ENCODE measurements at regions of chr2 and their contacts with region 1.

Region 1: DNA sequence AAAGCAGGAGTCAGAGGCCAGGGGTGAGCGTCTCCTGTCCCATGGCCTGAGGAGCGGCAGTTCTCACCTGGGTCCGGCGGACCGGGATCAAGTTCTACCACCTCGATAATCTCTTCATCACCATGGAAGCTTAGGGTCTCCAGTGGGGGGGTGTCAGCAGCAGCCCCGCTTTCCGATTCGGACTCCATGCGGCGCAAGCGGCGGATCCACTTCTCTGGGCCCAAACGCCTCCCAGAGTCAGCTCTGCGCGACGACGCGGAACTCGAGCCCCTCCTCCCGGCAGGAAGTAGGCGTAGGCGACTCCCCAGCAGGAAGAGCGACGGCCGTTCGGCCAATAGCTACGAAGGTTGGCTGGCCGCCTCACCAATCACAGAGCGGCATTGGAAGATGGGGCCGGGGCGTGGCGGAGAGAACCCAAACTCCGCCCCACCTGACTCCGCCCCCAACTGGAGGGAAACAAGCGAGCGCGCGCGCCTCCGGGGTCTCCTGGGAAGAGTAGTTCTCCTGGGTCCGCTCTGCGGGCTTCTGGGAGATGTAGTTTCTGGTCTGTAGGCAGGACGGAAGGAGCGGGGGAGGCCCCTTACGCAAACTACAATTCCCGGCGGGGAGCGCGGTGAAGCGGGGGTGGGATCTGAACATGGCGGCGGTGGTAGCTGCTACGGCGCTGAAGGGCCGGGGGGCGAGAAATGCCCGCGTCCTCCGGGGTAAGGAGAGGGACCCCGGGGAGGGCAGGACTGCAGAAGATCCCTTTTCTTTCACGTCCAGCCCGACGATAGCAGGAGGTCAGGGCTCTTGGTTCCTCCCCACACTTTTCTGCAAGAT is at the starts of genes AAMP and PNKD:
- DNase-seq: peak; percentile 100
- H3K4me3 ChIP-seq: peak within 1 kb of the TSS; percentile 76 to 94 (median 88)
- H3K27ac ChIP-seq: peak within 1 kb of the TSS; percentile 79 to 87 (median 84)
- H3K4me1 ChIP-seq: peaks cover 0 to 51% (median 38%) of the 10 kb centered on the region in 4 donors
- H3K27me3 ChIP-seq: no peaks in the 10 kb centered on the region
- CTCF ChIP-seq: no peak
- EP300 ChIP-seq: peak in 1 of 4 donors; percentile 10
- POLR2A ChIP-seq: peak; percentile 73 to 76
- total RNA-seq, gene AAMP: 85.7 to 103 (median 90.0) TPM
- total RNA-seq, gene PNKD: 46.8 to 95.1 (median 69.1) TPM

Region 2: GRCh38 chr2:218137514-218137913 is 132.6 kb before region 1 on chr2:
- intact Hi-C with region 1: no loop called
- DNase-seq: no peak
- H3K4me3 ChIP-seq: no peak overlapping the region
- H3K27ac ChIP-seq: no peak overlapping the region
- H3K4me1 ChIP-seq: peaks cover 0 to 8% (median 2%) of the 10 kb centered on the region in 4 donors
- H3K27me3 ChIP-seq: peaks cover 0 to 11% (median 0%) of the 10 kb centered on the region in 3 donors
- CTCF ChIP-seq: no peak
- EP300 ChIP-seq: no peak
- POLR2A ChIP-seq: no peak

Region 3: DNA sequence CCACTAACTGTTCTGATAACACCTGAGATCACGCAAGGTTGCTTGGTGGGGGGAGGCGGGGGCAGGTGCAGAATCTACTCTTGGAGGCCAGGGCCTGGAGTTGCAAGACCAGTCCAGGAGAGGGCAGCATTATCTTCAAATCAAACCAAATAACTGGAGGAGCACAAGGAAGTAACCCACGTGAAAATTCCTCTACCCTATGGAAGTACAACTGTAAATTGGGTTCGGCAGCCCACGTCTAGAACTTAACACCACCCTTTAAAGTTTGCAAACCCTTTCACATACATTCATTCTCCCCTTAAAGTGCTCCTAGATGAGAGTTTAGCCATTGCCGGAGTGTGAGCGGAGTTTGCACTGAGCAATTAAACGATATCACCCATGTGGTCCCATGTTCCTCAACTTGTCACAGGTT is 83.7 kb before region 1 on chr2:
- intact Hi-C with region 1: loop called (anchors 5 kb)
- DNase-seq: peak; percentile 76
- H3K4me3 ChIP-seq: no peak overlapping the region
- H3K27ac ChIP-seq: peak overlapping the region in 3 of 4 donors; percentile 66 to 81 (median 79)
- H3K4me1 ChIP-seq: peaks cover 0 to 29% (median 23%) of the 10 kb centered on the region in 4 donors
- H3K27me3 ChIP-seq: no peaks in the 10 kb centered on the region
- CTCF ChIP-seq: peak; percentile 47 to 85 (median 84)
- EP300 ChIP-seq: no peak
- POLR2A ChIP-seq: no peak

Region 4: GRCh38 chr2:218286570-218287459 is 16.7 kb after region 1 on chr2:
- intact Hi-C with region 1: loop called (anchors 1 kb)
- DNase-seq: peak; percentile 97
- H3K4me3 ChIP-seq: peak overlapping the region; percentile 35 to 50 (median 40)
- H3K27ac ChIP-seq: peak overlapping the region; percentile 91 to 99 (median 96)
- H3K4me1 ChIP-seq: peaks cover 0 to 97% (median 96%) of the 10 kb centered on the region in 4 donors
- H3K27me3 ChIP-seq: no peaks in the 10 kb centered on the region
- CTCF ChIP-seq: no peak
- EP300 ChIP-seq: peak in 3 of 4 donors; percentile 24 to 63 (median 45)
- POLR2A ChIP-seq: peak; percentile 20 to 69

Region 5: GRCh38 chr2:218343591-218343990 is 73.5 kb after region 1 on chr2:
- intact Hi-C with region 1: no loop called
- DNase-seq: no peak
- H3K4me3 ChIP-seq: no peak overlapping the region
- H3K27ac ChIP-seq: no peak overlapping the region
- H3K4me1 ChIP-seq: no peaks in the 10 kb centered on the region
- H3K27me3 ChIP-seq: no peaks in the 10 kb centered on the region
- CTCF ChIP-seq: no peak
- EP300 ChIP-seq: no peak
- POLR2A ChIP-seq: no peak

Region 6: GRCh38 chr2:218395797-218396687 is 125.9 kb after region 1 on chr2:
- intact Hi-C with region 1: loop called (anchors 2 kb)
- DNase-seq: peak; percentile 98
- H3K4me3 ChIP-seq: peak overlapping the region; percentile 92 to 100 (median 98)
- H3K27ac ChIP-seq: peak overlapping the region; percentile 97 to 100 (median 100)
- H3K4me1 ChIP-seq: peaks cover 0 to 38% (median 31%) of the 10 kb centered on the region in 4 donors
- H3K27me3 ChIP-seq: no peaks in the 10 kb centered on the region
- CTCF ChIP-seq: peak; percentile 89 to 97 (median 94)
- EP300 ChIP-seq: peak in 2 of 4 donors; percentile 10 to 16
- POLR2A ChIP-seq: peak; percentile 54